ENCODE measurements at regions of chr3 and their contacts with region 1.

Region 1: GRCh38 chr3:125437631-125438435 is 62.7 kb upstream of the ZNF148 start:
- DNase-seq: peak; percentile 54
- H3K4me3 ChIP-seq: no peak overlapping the region; a peak in 1 of 4 replicates
- H3K27ac ChIP-seq: no peak overlapping the region
- H3K4me1 ChIP-seq: peaks cover 0 to 6% of the 10 kb centered on the region in 2 experiments; a peak in 1 of 4 replicates
- H3K27me3 ChIP-seq: no peaks in the 10 kb centered on the region
- CTCF ChIP-seq: peak; percentile 97
- EP300 ChIP-seq: no peak
- RAD21 ChIP-seq: peak; percentile 90

Region 2: GRCh38 chr3:125406070-125406469 is 31.8 kb before region 1 on chr3:
- CTCF ChIA-PET with region 1: no interaction called
- POLR2A ChIA-PET with region 1: no interaction called
- DNase-seq: no peak
- H3K4me3 ChIP-seq: no peak overlapping the region
- H3K27ac ChIP-seq: no peak overlapping the region
- H3K4me1 ChIP-seq: no peaks in the 10 kb centered on the region
- H3K27me3 ChIP-seq: no peaks in the 10 kb centered on the region
- CTCF ChIP-seq: no peak
- EP300 ChIP-seq: no peak
- RAD21 ChIP-seq: no peak

Region 3: GRCh38 chr3:125418306-125418705 is 19.5 kb before region 1 on chr3:
- CTCF ChIA-PET with region 1: interaction called, 38 read pairs
- POLR2A ChIA-PET with region 1: no interaction called
- DNase-seq: no peak
- H3K4me3 ChIP-seq: no peak overlapping the region
- H3K27ac ChIP-seq: no peak overlapping the region
- H3K4me1 ChIP-seq: no peaks in the 10 kb centered on the region
- H3K27me3 ChIP-seq: no peaks in the 10 kb centered on the region
- CTCF ChIP-seq: no peak
- EP300 ChIP-seq: no peak
- RAD21 ChIP-seq: no peak

Region 4: DNA sequence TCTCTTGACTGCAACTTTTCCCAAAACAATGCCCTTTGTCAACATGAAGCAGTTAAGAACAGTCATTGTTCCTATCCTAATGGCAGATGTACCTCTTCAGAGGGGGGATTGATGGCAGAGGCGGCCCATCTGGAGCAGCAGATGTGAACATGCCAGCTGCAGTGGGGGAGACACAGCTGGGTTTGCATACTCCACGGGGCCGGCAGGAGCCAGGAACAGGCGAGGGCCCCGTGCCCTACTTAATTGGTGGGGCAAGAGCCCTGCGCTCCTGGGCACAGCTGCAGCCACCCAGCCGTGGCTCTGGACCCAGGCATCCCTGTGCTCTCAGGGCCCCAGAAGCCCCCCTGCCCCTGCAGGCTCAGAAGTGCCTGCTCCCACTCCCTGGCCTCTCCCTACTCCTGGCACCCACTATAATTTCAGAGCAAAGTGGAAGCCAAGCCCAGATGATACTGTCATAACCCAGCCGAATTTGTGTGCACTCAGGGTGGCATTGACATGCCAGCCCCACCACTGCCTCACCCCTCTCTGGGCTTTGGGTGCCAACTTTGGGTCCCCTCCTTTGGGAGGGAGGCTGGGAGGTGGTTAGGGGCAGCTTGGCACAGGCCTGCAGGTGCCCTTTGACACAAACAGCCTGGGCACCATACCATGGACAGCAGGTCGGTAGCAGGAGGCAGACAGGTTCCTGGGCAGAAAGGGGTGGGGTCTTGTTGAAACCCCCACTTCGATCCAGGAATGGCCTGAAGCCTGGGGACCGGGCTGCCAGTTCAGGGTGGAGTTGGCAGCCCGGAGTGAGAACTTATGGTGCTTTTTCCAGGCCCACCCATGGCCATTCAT is 565.8 kb after region 1 on chr3:
- CTCF ChIA-PET with region 1: no interaction called
- POLR2A ChIA-PET with region 1: no interaction called
- DNase-seq: no peak
- H3K4me3 ChIP-seq: no peak overlapping the region
- H3K27ac ChIP-seq: no peak overlapping the region
- H3K4me1 ChIP-seq: peaks cover 2 to 9% of the 10 kb centered on the region in 2 experiments; a peak in 3 of 4 replicates
- H3K27me3 ChIP-seq: no peaks in the 10 kb centered on the region
- CTCF ChIP-seq: no peak
- EP300 ChIP-seq: no peak
- RAD21 ChIP-seq: no peak

Measured in SK-N-SH (cell line).